ENCODE measurements at regions of chr6 and their contacts with region 1.

Region 1: GRCh38 chr6:152863618-152864326 is 113.2 kb downstream of the VIP start:
- DNase-seq: peak; percentile 53
- H3K4me3 ChIP-seq: no peak overlapping the region
- H3K27ac ChIP-seq: no peak overlapping the region
- H3K27me3 ChIP-seq: no peaks in the 10 kb centered on the region
- CTCF ChIP-seq: peak; percentile 73

Region 2: GRCh38 chr6:152874846-152875568 is 11.2 kb after region 1 on chr6:
- CTCF ChIA-PET with region 1: interaction called, 10 read pairs
- POLR2A ChIA-PET with region 1: no interaction called
- DNase-seq: no peak
- H3K4me3 ChIP-seq: no peak overlapping the region
- H3K27ac ChIP-seq: no peak overlapping the region
- H3K27me3 ChIP-seq: no peaks in the 10 kb centered on the region
- CTCF ChIP-seq: no peak

Region 3: GRCh38 chr6:152897799-152898399 is 34.1 kb after region 1 on chr6:
- CTCF ChIA-PET with region 1: interaction called, 12 read pairs
- POLR2A ChIA-PET with region 1: no interaction called
- DNase-seq: peak; percentile 18
- H3K4me3 ChIP-seq: no peak overlapping the region
- H3K27ac ChIP-seq: no peak overlapping the region
- H3K27me3 ChIP-seq: no peaks in the 10 kb centered on the region
- CTCF ChIP-seq: peak; percentile 93

Measured in AG04450 (cell line).